Ovary (tissue), 10 donors: ENCODE measurements at regions of chr20 and their contacts with region 1.

Region 1: GRCh38 chr20:37519508-37520128 is 1.4 kb upstream of the NNAT start:
- DNase-seq: no peak
- H3K4me3 ChIP-seq: no peak overlapping the region
- H3K27ac ChIP-seq: no peak overlapping the region
- H3K4me1 ChIP-seq: peaks cover 11% of the 10 kb centered on the region
- H3K27me3 ChIP-seq: no peaks in the 10 kb centered on the region
- CTCF ChIP-seq: no peak
- EP300 ChIP-seq: no peak
- POLR2A ChIP-seq: no peak

Region 2: DNA sequence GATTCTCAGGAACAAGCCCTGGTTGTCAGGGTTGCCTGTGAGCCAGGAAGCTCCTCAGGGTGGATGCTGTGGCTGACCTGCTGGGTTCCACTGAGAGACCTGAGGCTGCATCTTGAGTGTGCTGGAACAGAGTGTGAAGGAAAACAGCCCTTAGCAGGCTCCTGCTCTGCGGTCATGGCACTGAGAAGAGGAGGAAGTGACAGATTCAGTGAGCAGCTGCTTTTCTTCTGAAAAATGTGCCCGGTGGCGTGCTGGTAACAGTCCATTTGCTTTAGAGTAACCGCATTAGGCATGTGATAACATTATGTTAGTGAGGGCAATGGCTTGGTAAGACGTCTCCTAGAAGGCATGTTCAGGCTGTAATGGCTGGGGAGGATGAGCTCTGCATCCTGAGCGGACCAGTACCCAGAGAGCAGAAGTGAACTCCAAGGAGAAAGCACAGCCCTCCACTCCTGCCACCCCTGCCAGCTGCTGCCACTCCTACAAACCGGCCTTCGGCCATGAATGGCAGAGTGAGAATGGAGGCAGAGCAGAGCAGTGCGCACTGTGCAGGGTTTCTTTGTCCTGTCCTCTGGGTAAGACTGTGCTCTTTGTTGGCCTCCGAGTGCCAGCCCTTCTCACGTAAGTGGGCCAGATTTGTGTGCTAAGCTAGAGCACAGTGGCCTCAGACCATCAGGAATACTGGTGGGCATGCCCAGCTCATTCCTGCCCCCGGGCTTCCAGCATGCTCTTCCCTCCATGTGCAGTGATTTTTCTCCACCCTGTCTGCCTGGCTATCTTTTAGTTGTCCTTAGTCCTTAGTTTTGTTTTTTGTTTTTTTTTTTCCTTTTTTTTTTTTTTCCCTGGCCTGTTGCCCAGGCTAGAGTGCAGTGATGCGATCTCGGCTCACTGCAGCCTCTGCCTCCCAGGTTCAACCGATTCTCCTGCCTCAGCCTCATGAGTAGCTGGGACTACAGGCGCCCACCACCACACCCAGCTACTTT is 285.3 kb after region 1 on chr20:
- intact Hi-C with region 1: no loop called
- DNase-seq: no peak
- H3K4me3 ChIP-seq: no peak overlapping the region
- H3K27ac ChIP-seq: no peak overlapping the region
- H3K4me1 ChIP-seq: no peaks in the 10 kb centered on the region
- H3K27me3 ChIP-seq: no peaks in the 10 kb centered on the region
- CTCF ChIP-seq: no peak
- EP300 ChIP-seq: no peak
- POLR2A ChIP-seq: no peak

Region 3: GRCh38 chr20:38864662-38865061 is 1345.0 kb after region 1 on chr20:
- intact Hi-C with region 1: loop called in 1 of 4 experiments (anchors 5 kb)
- DNase-seq: no peak
- H3K4me3 ChIP-seq: no peak overlapping the region
- H3K27ac ChIP-seq: no peak overlapping the region
- H3K4me1 ChIP-seq: no peaks in the 10 kb centered on the region
- H3K27me3 ChIP-seq: no peaks in the 10 kb centered on the region
- CTCF ChIP-seq: no peak
- EP300 ChIP-seq: no peak
- POLR2A ChIP-seq: no peak